Endothelial cell of umbilical vein (primary cell): ENCODE measurements at regions of chr3 and their contacts with region 1.

Region 1: GRCh38 chr3:184017672-184018423 is at the start of gene ABCC5:
- DNase-seq: peak; percentile 93
- H3K4me3 ChIP-seq: peak within 1 kb of the TSS; percentile 21 to 59 (median 48)
- H3K27ac ChIP-seq: no peak within 1 kb of the TSS
- H3K4me1 ChIP-seq: peaks cover 7% of the 10 kb centered on the region
- H3K27me3 ChIP-seq: peaks cover 3 to 4% of the 10 kb centered on the region in 2 experiments
- CTCF ChIP-seq: no peak
- POLR2A ChIP-seq: peak; percentile 79
- total RNA-seq, gene ABCC5: 24.6 and 25.4 TPM in 2 replicates

Region 2: GRCh38 chr3:183895296-183895695 is 122.6 kb before region 1 on chr3:
- CTCF ChIA-PET with region 1: interaction called, 10 read pairs
- POLR2A ChIA-PET with region 1: interaction called, 3 read pairs
- dilution Hi-C with region 1: no loop called
- intact Hi-C with region 1: loop called (anchors 1 kb)
- DNase-seq: peak; percentile 43
- H3K4me3 ChIP-seq: no peak overlapping the region
- H3K27ac ChIP-seq: no peak overlapping the region
- H3K4me1 ChIP-seq: no peaks in the 10 kb centered on the region
- H3K27me3 ChIP-seq: peaks cover 6 to 13% of the 10 kb centered on the region in 2 experiments
- CTCF ChIP-seq: peak; percentile 75 to 78
- POLR2A ChIP-seq: no peak

Region 3: GRCh38 chr3:184005941-184006507 is 11.8 kb before region 1 on chr3:
- CTCF ChIA-PET with region 1: interaction called, 31 read pairs
- POLR2A ChIA-PET with region 1: interaction called, 7 read pairs
- dilution Hi-C with region 1: no loop called
- intact Hi-C with region 1: no loop called
- DNase-seq: peak; percentile 69
- H3K4me3 ChIP-seq: peak overlapping the region in 1 of 3 experiments; percentile 27
- H3K27ac ChIP-seq: no peak overlapping the region
- H3K4me1 ChIP-seq: peaks cover 15% of the 10 kb centered on the region
- H3K27me3 ChIP-seq: no peaks in the 10 kb centered on the region
- CTCF ChIP-seq: no peak
- POLR2A ChIP-seq: no peak

Region 4: GRCh38 chr3:184174646-184175492 is 157.0 kb after region 1 on chr3 and contains the start of gene AP2M1:
- CTCF ChIA-PET with region 1: no interaction called
- POLR2A ChIA-PET with region 1: interaction called, 5 read pairs
- dilution Hi-C with region 1: no loop called
- intact Hi-C with region 1: loop called (anchors 2 kb)
- DNase-seq: peak; percentile 100
- H3K4me3 ChIP-seq: peak within 1 kb of the TSS; percentile 84 to 97 (median 87)
- H3K27ac ChIP-seq: peak within 1 kb of the TSS; percentile 73
- H3K4me1 ChIP-seq: peaks cover 22% of the 10 kb centered on the region
- H3K27me3 ChIP-seq: no peaks in the 10 kb centered on the region
- CTCF ChIP-seq: peak in 1 of 2 donors; percentile 12
- POLR2A ChIP-seq: peak; percentile 91
- total RNA-seq, gene AP2M1: 400 and 431 TPM in 2 replicates

Region 5: DNA sequence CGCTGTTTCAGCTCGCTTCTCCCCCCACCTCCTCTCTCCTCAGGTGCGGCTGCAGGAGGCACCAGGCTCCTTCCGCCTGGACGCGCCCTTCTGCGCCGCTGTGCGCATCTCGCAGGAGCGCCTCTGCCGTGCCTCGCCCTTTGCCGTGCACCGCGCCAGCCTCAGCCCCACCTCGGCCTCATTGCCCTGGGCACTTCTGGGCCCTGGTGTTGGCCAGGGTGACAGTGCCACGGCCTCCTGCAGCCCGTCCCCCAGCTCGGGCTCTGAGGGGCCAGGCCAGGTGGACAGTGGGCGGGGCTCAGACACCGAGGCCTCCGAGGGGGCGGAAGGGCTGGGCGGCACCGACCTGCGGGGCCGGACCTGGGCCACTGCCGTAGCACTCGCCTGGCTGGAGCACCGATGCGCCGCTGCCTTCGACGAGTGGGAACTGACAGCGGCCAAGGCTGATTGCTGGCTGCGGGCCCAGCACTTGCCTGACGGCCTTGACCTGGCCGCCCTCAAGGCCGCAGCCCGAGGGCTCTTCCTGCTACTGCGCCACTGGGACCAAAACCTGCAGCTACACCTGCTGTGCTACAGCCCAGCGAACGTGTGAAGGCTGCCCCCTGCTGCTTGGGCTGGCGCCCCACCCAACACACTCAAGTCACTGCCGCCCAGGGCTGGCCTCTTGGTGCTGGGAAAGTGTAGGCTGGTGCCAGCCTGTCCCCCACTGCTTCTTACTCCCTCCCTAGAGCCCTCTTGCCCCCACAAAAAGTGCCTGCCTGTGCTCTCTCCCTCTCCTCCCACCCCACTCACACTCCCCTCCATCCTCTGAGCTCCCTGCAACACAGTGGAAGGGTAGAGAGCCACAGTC is 223.8 kb after region 1 on chr3:
- CTCF ChIA-PET with region 1: no interaction called
- POLR2A ChIA-PET with region 1: no interaction called
- dilution Hi-C with region 1: no loop called
- intact Hi-C with region 1: loop called (anchors 5 kb)
- DNase-seq: peak; percentile 48
- H3K4me3 ChIP-seq: no peak overlapping the region
- H3K27ac ChIP-seq: no peak overlapping the region
- H3K4me1 ChIP-seq: no peaks in the 10 kb centered on the region
- H3K27me3 ChIP-seq: no peaks in the 10 kb centered on the region
- CTCF ChIP-seq: peak; percentile 50 to 83
- POLR2A ChIP-seq: no peak

Region 6: GRCh38 chr3:184380191-184380626 is 362.4 kb after region 1 on chr3:
- CTCF ChIA-PET with region 1: no interaction called
- POLR2A ChIA-PET with region 1: no interaction called
- dilution Hi-C with region 1: no loop called
- intact Hi-C with region 1: loop called (anchors 5 kb)
- DNase-seq: no peak
- H3K4me3 ChIP-seq: peak overlapping the region in 1 of 3 experiments; percentile 10
- H3K27ac ChIP-seq: no peak overlapping the region
- H3K4me1 ChIP-seq: peaks cover 10% of the 10 kb centered on the region
- H3K27me3 ChIP-seq: peaks cover 45 to 51% of the 10 kb centered on the region in 2 experiments
- CTCF ChIP-seq: no peak
- POLR2A ChIP-seq: no peak